Stomach (tissue), 19 donors: ENCODE measurements at regions of chr4 and their contacts with region 1.

Region 1: DNA sequence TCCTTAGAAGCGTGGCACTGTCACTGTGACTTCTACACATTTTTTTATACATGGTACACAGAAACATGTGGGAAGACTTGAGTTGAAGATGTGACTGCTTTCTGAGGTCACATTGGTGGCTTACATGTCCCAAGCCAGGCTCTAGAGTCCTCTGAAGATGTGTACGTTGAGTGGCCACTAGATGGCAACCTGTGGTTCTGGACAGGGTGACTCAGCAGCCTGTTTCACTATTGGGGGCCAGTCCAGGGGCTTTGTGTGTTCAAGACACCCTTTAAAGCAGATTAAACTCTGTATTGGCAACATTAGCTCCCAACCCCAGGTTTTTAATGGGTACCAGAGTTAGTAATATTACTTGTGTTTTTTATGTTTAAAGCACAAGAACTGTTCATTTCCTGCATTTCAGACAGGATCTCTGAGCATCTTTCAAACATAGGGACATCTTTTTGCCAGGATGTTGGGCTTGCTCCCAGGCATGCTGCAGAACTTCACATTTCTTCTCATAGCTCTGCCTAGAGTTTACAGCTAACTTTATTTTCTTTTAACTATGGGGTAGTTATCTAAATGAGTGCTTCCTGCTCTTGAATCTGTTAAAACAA is 53.0 kb downstream of the DCUN1D4 start:
- DNase-seq: peak; percentile 62 to 84
- H3K4me3 ChIP-seq: no peak overlapping the region
- H3K27ac ChIP-seq: peak overlapping the region in 1 of 5 donors; percentile 47
- H3K4me1 ChIP-seq: peaks cover 0 to 27% (median 9%) of the 10 kb centered on the region in 4 donors
- H3K27me3 ChIP-seq: no peaks in the 10 kb centered on the region
- CTCF ChIP-seq: peak in 5 of 7 experiments; percentile 9 to 76 (median 63)
- EP300 ChIP-seq: no peak
- POLR2A ChIP-seq: no peak

Region 2: DNA sequence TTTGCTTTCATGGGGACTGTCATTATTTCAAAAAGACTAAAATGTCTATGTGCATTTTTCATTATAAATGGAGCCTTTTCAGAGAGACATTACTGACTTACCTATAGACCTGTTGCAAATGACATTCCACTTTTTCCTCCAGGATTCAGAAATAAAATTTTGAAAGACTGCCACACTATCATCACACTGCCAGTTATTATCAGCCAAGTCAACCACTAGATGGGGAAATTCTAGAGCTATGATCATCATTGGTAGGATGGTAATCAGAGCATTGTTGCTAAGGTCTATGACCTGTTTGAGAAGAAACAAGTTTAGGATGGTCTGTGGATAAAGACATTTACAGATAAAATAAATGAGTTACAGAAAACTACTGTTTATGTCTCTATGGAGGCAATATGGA is 101.7 kb after region 1 on chr4:
- intact Hi-C with region 1: no loop called
- DNase-seq: no peak
- H3K4me3 ChIP-seq: no peak overlapping the region
- H3K27ac ChIP-seq: no peak overlapping the region
- H3K4me1 ChIP-seq: no peaks in the 10 kb centered on the region
- H3K27me3 ChIP-seq: no peaks in the 10 kb centered on the region
- CTCF ChIP-seq: no peak
- EP300 ChIP-seq: no peak
- POLR2A ChIP-seq: no peak

Region 3: GRCh38 chr4:52028969-52029368 is 133.1 kb after region 1 on chr4:
- intact Hi-C with region 1: loop called (anchors 10 kb)
- DNase-seq: no peak
- H3K4me3 ChIP-seq: no peak overlapping the region
- H3K27ac ChIP-seq: no peak overlapping the region
- H3K4me1 ChIP-seq: peaks cover 0 to 6% (median 0%) of the 10 kb centered on the region in 4 donors
- H3K27me3 ChIP-seq: no peaks in the 10 kb centered on the region
- CTCF ChIP-seq: no peak
- EP300 ChIP-seq: no peak
- POLR2A ChIP-seq: no peak